Activated T-helper 1 cell treated with anti-CD3 and anti-CD28 coated beads, Interleukin-12 subunit alpha, Interleukin-12 subunit beta, Interleukin-2, Interleukin-4 antibody, amounts not matched to agents 30 ng/mL and 10 ng/mL and 1 ng/mL, durations not matched to agents 14 hours and 24 hours and 36 hours (primary cell): ENCODE measurements at regions of chr7 and their contacts with region 1.

Region 1: GRCh38 chr7:102814025-102814471 is 65.2 kb downstream of the FAM185A start:
- DNase-seq: no peak
- H3K4me3 Mint-ChIP-seq: no peak overlapping the region
- H3K27ac Mint-ChIP-seq: no peak overlapping the region
- H3K4me1 Mint-ChIP-seq: peaks cover 14% of the 10 kb centered on the region
- H3K27me3 Mint-ChIP-seq: peaks cover 3% of the 10 kb centered on the region

Region 2: DNA sequence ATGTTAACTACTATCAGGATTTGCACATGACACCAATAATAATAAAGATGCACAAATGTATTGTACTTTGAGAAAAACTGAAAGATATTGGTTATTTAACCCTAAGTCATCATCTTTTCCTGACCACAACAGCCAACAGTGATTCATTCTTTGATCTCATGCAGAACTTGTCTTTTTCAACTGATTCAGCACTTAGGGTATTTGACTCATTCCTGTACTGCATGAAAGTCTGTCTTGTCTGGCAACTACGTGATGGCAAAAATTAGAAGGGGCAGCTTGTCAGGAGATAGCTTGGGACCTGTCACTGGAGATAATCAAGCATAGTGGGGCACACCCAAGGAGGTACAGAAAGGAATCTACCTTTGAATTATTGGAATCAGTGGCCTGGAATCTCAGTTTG is 21.0 kb after region 1 on chr7:
- intact Hi-C with region 1: loop called (anchors 1 kb)
- DNase-seq: peak; percentile 5
- H3K4me3 Mint-ChIP-seq: no peak overlapping the region
- H3K27ac Mint-ChIP-seq: peak overlapping the region; percentile 41
- H3K4me1 Mint-ChIP-seq: peaks cover 11% of the 10 kb centered on the region
- H3K27me3 Mint-ChIP-seq: peaks cover 10% of the 10 kb centered on the region

Region 3: GRCh38 chr7:102849079-102849478 is 35.0 kb after region 1 on chr7:
- intact Hi-C with region 1: no loop called
- DNase-seq: no peak
- H3K4me3 Mint-ChIP-seq: no peak overlapping the region
- H3K27ac Mint-ChIP-seq: no peak overlapping the region
- H3K4me1 Mint-ChIP-seq: no peaks in the 10 kb centered on the region
- H3K27me3 Mint-ChIP-seq: peaks cover 6% of the 10 kb centered on the region

Region 4: DNA sequence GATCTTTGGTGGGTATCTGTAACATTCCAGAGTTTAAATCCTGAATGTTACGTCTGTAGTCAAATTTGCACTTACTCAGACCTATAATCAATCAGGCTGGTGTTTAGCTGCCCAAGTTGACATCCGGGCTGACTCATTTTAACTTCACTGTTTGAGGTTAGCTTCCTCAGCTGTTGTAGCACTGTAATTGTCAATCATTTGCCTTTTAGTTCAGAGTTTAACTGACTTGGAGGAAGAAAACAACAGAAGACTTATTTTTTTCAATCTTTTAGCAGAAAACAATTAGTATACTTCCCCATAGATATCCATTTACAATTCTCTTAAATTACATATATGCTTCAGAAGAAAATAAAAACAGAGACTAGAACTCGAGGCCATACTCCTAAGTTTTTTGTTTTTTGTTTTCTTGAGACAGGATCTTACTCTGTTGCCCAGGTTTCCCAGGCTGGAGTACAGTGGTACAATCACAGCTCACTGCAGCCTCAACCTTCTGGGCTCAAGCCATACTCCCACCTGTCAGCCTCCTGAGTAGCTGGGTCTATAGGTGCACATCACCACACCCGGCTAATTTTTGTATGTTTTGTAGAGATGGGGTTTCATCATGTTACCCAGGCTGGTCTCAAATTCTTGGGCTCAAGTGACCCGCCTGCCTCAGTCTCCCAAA is 60.2 kb after region 1 on chr7:
- intact Hi-C with region 1: loop called (anchors 1 kb)
- DNase-seq: peak; percentile 19
- H3K4me3 Mint-ChIP-seq: no peak overlapping the region
- H3K27ac Mint-ChIP-seq: peak overlapping the region; percentile 32
- H3K4me1 Mint-ChIP-seq: peaks cover 34% of the 10 kb centered on the region
- H3K27me3 Mint-ChIP-seq: peaks cover 5% of the 10 kb centered on the region

Region 5: DNA sequence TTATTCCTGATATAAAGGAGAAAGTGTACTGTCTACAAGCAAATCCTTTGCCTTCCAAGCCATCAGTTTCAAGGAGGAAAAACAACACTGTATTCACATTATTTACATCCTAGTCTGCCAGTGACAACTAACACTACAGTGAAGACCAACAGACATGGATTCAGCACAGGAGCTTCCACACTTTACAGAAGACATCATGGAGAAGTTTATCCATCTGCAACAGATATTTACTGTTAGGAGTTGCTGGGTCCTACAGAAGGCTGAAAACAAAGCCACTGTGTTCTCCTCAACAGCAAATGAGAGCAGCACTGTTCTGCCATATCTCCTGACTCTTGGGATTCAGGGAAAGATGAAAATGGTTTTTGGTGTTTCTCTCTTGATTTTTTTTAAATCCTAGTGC is 302.9 kb after region 1 on chr7:
- intact Hi-C with region 1: no loop called
- DNase-seq: no peak
- H3K4me3 Mint-ChIP-seq: no peak overlapping the region
- H3K27ac Mint-ChIP-seq: no peak overlapping the region
- H3K4me1 Mint-ChIP-seq: peaks cover 7% of the 10 kb centered on the region
- H3K27me3 Mint-ChIP-seq: no peaks in the 10 kb centered on the region